Activated T-helper 1 cell treated with anti-CD3 and anti-CD28 coated beads, Interleukin-12 subunit alpha, Interleukin-12 subunit beta, Interleukin-2, Interleukin-4 antibody, amounts not matched to agents 30 ng/mL and 10 ng/mL and 1 ng/mL, durations not matched to agents 14 hours and 24 hours and 36 hours (primary cell): ENCODE measurements at regions of chr3 and their contacts with region 1.

Region 1: GRCh38 chr3:99859825-99860224 is 42.2 kb downstream of the CMSS1 start:
- DNase-seq: no peak
- H3K4me3 Mint-ChIP-seq: no peak overlapping the region
- H3K27ac Mint-ChIP-seq: no peak overlapping the region
- H3K4me1 Mint-ChIP-seq: peaks cover 72% of the 10 kb centered on the region
- H3K27me3 Mint-ChIP-seq: peaks cover 3% of the 10 kb centered on the region

Region 2: GRCh38 chr3:99965077-99965476 is 105.3 kb after region 1 on chr3:
- intact Hi-C with region 1: loop called (anchors 5 kb)
- DNase-seq: no peak
- H3K4me3 Mint-ChIP-seq: no peak overlapping the region
- H3K27ac Mint-ChIP-seq: no peak overlapping the region
- H3K4me1 Mint-ChIP-seq: peaks cover 30% of the 10 kb centered on the region
- H3K27me3 Mint-ChIP-seq: no peaks in the 10 kb centered on the region

Region 3: GRCh38 chr3:100354850-100355249 is 495.0 kb after region 1 on chr3:
- intact Hi-C with region 1: no loop called
- DNase-seq: no peak
- H3K4me3 Mint-ChIP-seq: no peak overlapping the region
- H3K27ac Mint-ChIP-seq: no peak overlapping the region
- H3K4me1 Mint-ChIP-seq: no peaks in the 10 kb centered on the region
- H3K27me3 Mint-ChIP-seq: no peaks in the 10 kb centered on the region